Activated CD4-positive, alpha-beta memory T cell treated with anti-CD3 and anti-CD28 coated beads for 36 hours (primary cell): ENCODE measurements at regions of chr4 and their contacts with region 1.

Region 1: GRCh38 chr4:107719922-107720722 is at the start of gene PAPSS1:
- DNase-seq: peak; percentile 96
- H3K4me3 Mint-ChIP-seq: peak within 1 kb of the TSS; percentile 88
- H3K27ac Mint-ChIP-seq: peak within 1 kb of the TSS; percentile 84
- H3K4me1 Mint-ChIP-seq: peaks cover 26% of the 10 kb centered on the region
- H3K27me3 Mint-ChIP-seq: no peaks in the 10 kb centered on the region
- total RNA-seq, gene PAPSS1: 33.0 to 34.9 TPM

Region 2: GRCh38 chr4:107423677-107424405 is 296.3 kb before region 1 on chr4:
- CTCF ChIA-PET with region 1: no interaction called
- POLR2A ChIA-PET with region 1: no interaction called
- intact Hi-C with region 1: loop called (anchors 5 kb)
- DNase-seq: no peak
- H3K4me3 Mint-ChIP-seq: no peak overlapping the region
- H3K27ac Mint-ChIP-seq: no peak overlapping the region
- H3K4me1 Mint-ChIP-seq: no peaks in the 10 kb centered on the region
- H3K27me3 Mint-ChIP-seq: no peaks in the 10 kb centered on the region

Region 3: GRCh38 chr4:107654694-107655093 is 65.4 kb before region 1 on chr4:
- CTCF ChIA-PET with region 1: no interaction called
- POLR2A ChIA-PET with region 1: no interaction called
- intact Hi-C with region 1: loop called (anchors 5 kb)
- DNase-seq: no peak
- H3K4me3 Mint-ChIP-seq: no peak overlapping the region
- H3K27ac Mint-ChIP-seq: no peak overlapping the region
- H3K4me1 Mint-ChIP-seq: peaks cover 2% of the 10 kb centered on the region
- H3K27me3 Mint-ChIP-seq: no peaks in the 10 kb centered on the region

Region 4: GRCh38 chr4:107709916-107710315 is 10.2 kb before region 1 on chr4:
- CTCF ChIA-PET with region 1: no interaction called
- POLR2A ChIA-PET with region 1: interaction called, 4 read pairs
- intact Hi-C with region 1: loop called (anchors 1 kb)
- DNase-seq: no peak
- H3K4me3 Mint-ChIP-seq: no peak overlapping the region
- H3K27ac Mint-ChIP-seq: no peak overlapping the region
- H3K4me1 Mint-ChIP-seq: peaks cover 15% of the 10 kb centered on the region
- H3K27me3 Mint-ChIP-seq: no peaks in the 10 kb centered on the region

Region 5: GRCh38 chr4:107824353-107825071 is 104.4 kb after region 1 on chr4 and contains the start of gene SGMS2:
- CTCF ChIA-PET with region 1: no interaction called
- POLR2A ChIA-PET with region 1: no interaction called
- intact Hi-C with region 1: loop called (anchors 2 kb)
- DNase-seq: peak; percentile 86
- H3K4me3 Mint-ChIP-seq: peak within 1 kb of the TSS; percentile 77
- H3K27ac Mint-ChIP-seq: no peak within 1 kb of the TSS
- H3K4me1 Mint-ChIP-seq: peaks cover 9% of the 10 kb centered on the region
- H3K27me3 Mint-ChIP-seq: peaks cover 45% of the 10 kb centered on the region
- total RNA-seq, gene SGMS2: 0.36 to 0.76 TPM

Region 6: DNA sequence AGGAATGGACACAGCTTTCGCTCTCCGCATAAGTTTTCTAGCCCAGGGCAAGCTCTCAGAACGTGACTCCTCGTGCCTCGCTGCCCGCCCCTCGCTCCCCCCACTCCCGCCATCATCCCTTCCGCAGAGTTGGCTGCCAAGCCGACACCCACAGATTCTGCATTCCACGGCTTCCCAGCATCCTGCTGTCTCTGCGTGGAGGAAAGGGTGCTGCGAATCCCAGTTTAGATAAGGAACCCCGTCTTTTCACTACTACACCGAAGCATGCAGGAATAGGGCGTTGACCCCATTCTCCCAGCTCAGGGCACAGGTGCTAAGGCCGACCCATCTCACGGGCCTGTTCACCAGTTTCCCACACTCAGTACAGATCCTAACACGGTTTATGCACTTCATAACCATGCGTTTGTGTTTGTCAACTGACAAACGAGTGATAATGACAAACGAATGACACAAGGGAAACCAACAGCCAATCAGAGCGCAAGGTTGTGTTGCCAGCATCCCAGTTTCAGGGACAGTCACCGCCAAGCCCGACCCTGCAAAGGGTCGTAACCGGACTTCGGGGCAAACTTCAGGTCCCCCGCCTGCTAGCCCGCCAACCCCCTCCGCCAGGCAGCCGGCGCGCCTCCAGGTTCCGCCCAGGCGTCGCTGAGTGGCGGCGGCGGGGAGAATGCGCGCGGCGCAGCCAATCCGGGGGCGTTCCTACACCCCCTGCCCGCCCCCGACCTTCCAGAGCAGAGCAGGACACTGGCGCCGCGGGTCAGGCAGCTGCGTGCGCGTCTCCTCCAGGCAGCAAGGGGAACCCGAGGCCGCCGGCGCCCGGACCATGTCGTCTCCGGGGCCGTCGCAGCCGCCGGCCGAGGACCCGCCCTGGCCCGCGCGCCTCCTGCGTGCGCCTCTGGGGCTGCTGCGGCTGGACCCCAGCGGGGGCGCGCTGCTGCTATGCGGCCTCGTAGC is 211.0 kb after region 1 on chr4 and contains the start of gene CYP2U1:
- CTCF ChIA-PET with region 1: interaction called, 5 read pairs
- POLR2A ChIA-PET with region 1: interaction called, 5 read pairs
- intact Hi-C with region 1: loop called (anchors 1 kb)
- DNase-seq: peak; percentile 80
- H3K4me3 Mint-ChIP-seq: peak within 1 kb of the TSS; percentile 81
- H3K27ac Mint-ChIP-seq: peak within 1 kb of the TSS; percentile 25
- H3K4me1 Mint-ChIP-seq: peaks cover 14% of the 10 kb centered on the region
- H3K27me3 Mint-ChIP-seq: no peaks in the 10 kb centered on the region
- total RNA-seq, gene CYP2U1: 1.2 to 1.5 TPM

Region 7: GRCh38 chr4:108620101-108620932 is 900.2 kb after region 1 on chr4 and contains the start of gene RPL34:
- CTCF ChIA-PET with region 1: no interaction called
- POLR2A ChIA-PET with region 1: no interaction called
- intact Hi-C with region 1: loop called (anchors 1 kb)
- DNase-seq: peak; percentile 97
- H3K4me3 Mint-ChIP-seq: peak within 1 kb of the TSS; percentile 88
- H3K27ac Mint-ChIP-seq: peak within 1 kb of the TSS; percentile 95
- H3K4me1 Mint-ChIP-seq: peaks cover 48% of the 10 kb centered on the region
- H3K27me3 Mint-ChIP-seq: no peaks in the 10 kb centered on the region
- total RNA-seq, gene RPL34: 1,653 to 1,658 TPM